ENCODE measurements at regions of chr5 and their contacts with region 1.

Region 1: GRCh38 chr5:41903892-41904799 is at the start of gene RIMOC1:
- DNase-seq: peak; percentile 99
- ATAC-seq: peak; percentile 99
- H3K4me3 ChIP-seq: peak within 1 kb of the TSS; percentile 78
- H3K27ac ChIP-seq: peak within 1 kb of the TSS; percentile 10
- H3K4me1 ChIP-seq: peaks cover 18% of the 10 kb centered on the region
- H3K27me3 ChIP-seq: no peaks in the 10 kb centered on the region
- CTCF ChIP-seq: no peak
- total RNA-seq, gene RIMOC1: 10.3 and 11.3 TPM in 2 replicates

Region 2: GRCh38 chr5:41776435-41776834 is 127.7 kb before region 1 on chr5:
- CTCF ChIA-PET with region 1: no interaction called
- POLR2A ChIA-PET with region 1: interaction called, 10 read pairs
- intact Hi-C with region 1: no loop called
- DNase-seq: no peak
- ATAC-seq: no peak
- H3K4me3 ChIP-seq: no peak overlapping the region
- H3K27ac ChIP-seq: no peak overlapping the region
- H3K4me1 ChIP-seq: no peaks in the 10 kb centered on the region
- H3K27me3 ChIP-seq: no peaks in the 10 kb centered on the region
- CTCF ChIP-seq: no peak

Region 3: DNA sequence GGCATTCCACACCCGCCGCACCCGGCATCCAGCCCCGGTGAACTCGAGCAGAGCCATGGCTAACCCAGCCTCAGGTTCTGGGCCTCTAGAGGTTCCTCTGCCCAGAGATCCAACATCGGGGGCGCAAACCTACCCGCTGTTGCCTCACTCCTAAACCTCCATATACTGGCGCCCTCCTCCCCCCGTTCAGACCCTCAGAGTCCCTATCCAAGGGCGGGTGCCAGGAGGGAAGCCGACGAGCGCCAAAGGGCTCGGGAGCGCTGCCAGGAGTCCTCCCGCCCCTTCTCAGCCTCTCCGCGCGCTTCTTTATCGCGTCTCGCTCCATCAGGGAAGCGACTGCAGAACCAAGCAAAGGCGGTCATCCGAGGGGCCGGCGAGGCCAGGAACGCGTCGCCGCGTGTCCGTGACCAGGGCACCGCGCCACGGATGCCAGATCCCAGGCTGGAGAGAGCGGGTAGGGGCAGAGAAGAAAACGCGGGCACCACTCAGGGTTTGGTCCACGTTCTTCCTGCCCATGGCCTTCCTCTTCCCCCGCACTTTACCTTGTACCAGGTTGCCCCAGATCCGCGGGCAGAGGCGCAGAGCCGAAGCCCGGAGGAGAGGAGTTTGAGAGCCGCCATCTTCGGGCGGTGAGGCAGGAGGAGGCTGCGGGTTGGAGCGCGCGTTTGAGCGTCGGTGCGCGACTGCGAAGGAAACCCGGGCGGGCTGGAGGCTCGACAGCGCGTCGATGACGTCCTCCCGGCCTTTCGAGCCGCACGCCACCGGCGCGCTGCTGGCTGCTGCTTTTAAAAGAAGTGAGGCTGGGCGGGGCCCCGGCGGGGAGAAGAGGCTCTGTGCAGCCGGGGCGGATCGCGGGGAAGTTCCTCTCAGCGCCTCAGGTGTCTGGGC is 34.2 kb before region 1 on chr5 and contains the start of gene OXCT1:
- CTCF ChIA-PET with region 1: no interaction called
- POLR2A ChIA-PET with region 1: no interaction called
- intact Hi-C with region 1: loop called (anchors 1 kb)
- DNase-seq: peak; percentile 93
- ATAC-seq: peak; percentile 72
- H3K4me3 ChIP-seq: peak within 1 kb of the TSS; percentile 77
- H3K27ac ChIP-seq: peak within 1 kb of the TSS; percentile 13
- H3K4me1 ChIP-seq: peaks cover 22% of the 10 kb centered on the region
- H3K27me3 ChIP-seq: no peaks in the 10 kb centered on the region
- CTCF ChIP-seq: no peak
- total RNA-seq, gene OXCT1: 25.5 and 30.8 TPM in 2 replicates

Region 4: GRCh38 chr5:41883940-41884339 is 20.2 kb before region 1 on chr5:
- CTCF ChIA-PET with region 1: no interaction called
- POLR2A ChIA-PET with region 1: interaction called, 3 read pairs
- intact Hi-C with region 1: loop called (anchors 1 kb)
- DNase-seq: peak; percentile 93
- ATAC-seq: peak; percentile 98
- H3K4me3 ChIP-seq: no peak overlapping the region
- H3K27ac ChIP-seq: peak overlapping the region; percentile 63
- H3K4me1 ChIP-seq: peaks cover 28% of the 10 kb centered on the region
- H3K27me3 ChIP-seq: no peaks in the 10 kb centered on the region
- CTCF ChIP-seq: no peak